Right ventricle myocardium inferior (tissue), 1 donor: ENCODE measurements at regions of chr20 and their contacts with region 1.

Region 1: DNA sequence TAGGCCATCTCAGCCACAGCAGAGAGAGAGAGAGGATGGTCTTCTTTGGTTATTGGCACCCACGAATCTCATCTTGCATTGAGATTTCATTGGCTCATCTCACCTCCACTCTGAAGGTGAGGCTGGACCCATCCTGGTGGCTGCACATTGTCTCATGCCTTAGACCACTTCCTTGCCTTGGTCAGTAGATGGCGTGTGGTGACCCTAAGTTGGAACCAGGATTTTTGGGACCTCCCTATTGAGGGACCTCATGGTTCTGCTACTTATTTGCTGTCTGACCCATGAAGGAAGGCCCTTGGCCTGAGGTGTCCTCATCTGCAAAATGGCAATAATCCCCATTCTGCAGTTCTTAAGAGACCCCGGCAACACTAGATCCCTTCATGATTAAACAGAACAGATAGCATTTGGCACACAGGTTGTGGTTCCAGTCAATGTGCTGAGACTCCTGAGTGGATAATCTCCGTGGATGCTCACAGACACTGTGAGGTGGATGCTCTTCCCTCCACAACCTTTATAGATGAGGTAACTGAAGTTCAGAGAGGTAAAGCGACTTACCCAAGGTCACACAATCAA is 21.5 kb upstream of the AAR2 start:
- DNase-seq: no peak
- ATAC-seq: no peak

Region 2: DNA sequence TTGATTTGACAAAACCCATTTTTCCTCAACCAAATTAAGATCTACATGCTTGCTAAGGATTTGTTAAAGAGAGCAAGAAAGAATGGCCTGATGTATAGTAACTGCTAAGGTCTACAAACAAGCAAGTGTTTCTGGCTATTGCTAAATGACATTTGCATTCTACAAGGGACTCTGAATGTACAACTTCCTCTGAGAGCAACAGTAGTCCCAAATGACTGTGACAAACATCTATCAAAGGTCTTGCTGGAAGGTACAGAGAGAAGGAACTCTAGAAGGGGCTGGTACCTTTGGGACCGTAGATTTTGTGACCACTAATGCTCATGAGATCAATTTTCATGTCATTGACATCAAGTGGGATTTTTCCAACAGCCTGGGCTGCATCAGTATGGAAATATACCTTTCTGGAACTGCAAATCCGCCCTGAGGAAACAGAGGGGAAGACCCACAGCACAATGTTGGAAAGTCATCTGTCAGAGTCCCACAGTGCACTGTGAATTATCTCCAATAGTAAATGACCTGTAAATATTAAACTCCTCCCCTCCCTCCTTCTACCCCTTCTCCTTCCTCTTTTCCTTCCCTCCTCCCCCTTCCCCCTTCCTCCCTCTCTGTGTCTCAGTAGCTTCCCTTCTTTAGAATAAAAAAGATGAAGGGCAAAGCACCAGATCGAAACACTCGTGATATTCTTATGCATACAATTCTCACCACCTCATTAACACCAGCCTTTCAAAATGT is 534.2 kb before region 1 on chr20:
- intact Hi-C with region 1: no loop called
- DNase-seq: no peak
- ATAC-seq: no peak

Region 3: GRCh38 chr20:36439040-36439730 is 224.4 kb after region 1 on chr20:
- intact Hi-C with region 1: loop called (anchors 5 kb)
- DNase-seq: peak; percentile 78
- ATAC-seq: peak; percentile 60